Motor neuron (in vitro differentiated cells): ENCODE measurements at regions of chr20 and their contacts with region 1.

Region 1: DNA sequence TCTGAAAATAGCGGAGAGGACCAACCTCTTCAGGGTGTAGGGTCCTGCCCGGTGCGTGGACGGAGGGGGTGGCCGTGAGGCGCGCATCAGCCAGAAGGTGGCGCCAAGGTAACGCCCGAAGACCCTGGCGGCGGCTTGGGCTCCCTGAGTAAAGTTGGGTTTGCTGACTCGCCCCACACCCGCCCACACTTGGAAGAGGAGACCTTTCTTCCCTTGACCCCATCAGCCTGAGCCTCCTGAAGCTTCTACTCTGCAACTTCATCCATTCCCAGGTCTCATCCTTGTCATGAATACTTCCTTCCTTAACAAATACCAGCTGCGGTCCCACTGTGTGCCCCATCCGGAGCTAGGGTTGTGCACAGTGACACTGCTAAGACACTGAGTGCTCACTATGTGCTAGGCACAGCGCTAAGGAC is 14.6 kb downstream of the CD40 start:
- ATAC-seq: peak; percentile 77 to 87 (median 81)
- H3K4me3 ChIP-seq: no peak overlapping the region
- H3K27ac ChIP-seq: no peak overlapping the region
- H3K4me1 ChIP-seq: peaks cover 20 to 33% of the 10 kb centered on the region in 2 donors

Region 2: GRCh38 chr20:44435630-44436335 is 1696.9 kb before region 1 on chr20:
- in situ Hi-C with region 1: no loop called
- ATAC-seq: no peak
- H3K4me3 ChIP-seq: no peak overlapping the region
- H3K27ac ChIP-seq: no peak overlapping the region
- H3K4me1 ChIP-seq: no peaks in the 10 kb centered on the region

Region 3: GRCh38 chr20:45771182-45771759 is 361.4 kb before region 1 on chr20:
- in situ Hi-C with region 1: no loop called
- ATAC-seq: peak; percentile 55 to 79 (median 70)
- H3K4me3 ChIP-seq: no peak overlapping the region
- H3K27ac ChIP-seq: no peak overlapping the region
- H3K4me1 ChIP-seq: peaks cover 3 to 7% of the 10 kb centered on the region in 2 donors

Region 4: GRCh38 chr20:45971675-45972499 is 160.8 kb before region 1 on chr20 and contains the start of gene ZNF335:
- in situ Hi-C with region 1: no loop called
- ATAC-seq: peak; percentile 71 to 85 (median 81)
- H3K4me3 ChIP-seq: peak within 1 kb of the TSS; percentile 68 to 92 (median 78)
- H3K27ac ChIP-seq: peak within 1 kb of the TSS; percentile 100
- H3K4me1 ChIP-seq: peaks cover 7 to 12% of the 10 kb centered on the region in 2 donors
- total RNA-seq, gene ZNF335: 7.3 to 21.9 (median 12.1) TPM

Region 5: GRCh38 chr20:46270977-46271744 is 138.4 kb after region 1 on chr20:
- in situ Hi-C with region 1: no loop called
- ATAC-seq: no peak
- H3K4me3 ChIP-seq: no peak overlapping the region
- H3K27ac ChIP-seq: no peak overlapping the region
- H3K4me1 ChIP-seq: peaks cover 26 to 32% of the 10 kb centered on the region in 2 donors

Region 6: DNA sequence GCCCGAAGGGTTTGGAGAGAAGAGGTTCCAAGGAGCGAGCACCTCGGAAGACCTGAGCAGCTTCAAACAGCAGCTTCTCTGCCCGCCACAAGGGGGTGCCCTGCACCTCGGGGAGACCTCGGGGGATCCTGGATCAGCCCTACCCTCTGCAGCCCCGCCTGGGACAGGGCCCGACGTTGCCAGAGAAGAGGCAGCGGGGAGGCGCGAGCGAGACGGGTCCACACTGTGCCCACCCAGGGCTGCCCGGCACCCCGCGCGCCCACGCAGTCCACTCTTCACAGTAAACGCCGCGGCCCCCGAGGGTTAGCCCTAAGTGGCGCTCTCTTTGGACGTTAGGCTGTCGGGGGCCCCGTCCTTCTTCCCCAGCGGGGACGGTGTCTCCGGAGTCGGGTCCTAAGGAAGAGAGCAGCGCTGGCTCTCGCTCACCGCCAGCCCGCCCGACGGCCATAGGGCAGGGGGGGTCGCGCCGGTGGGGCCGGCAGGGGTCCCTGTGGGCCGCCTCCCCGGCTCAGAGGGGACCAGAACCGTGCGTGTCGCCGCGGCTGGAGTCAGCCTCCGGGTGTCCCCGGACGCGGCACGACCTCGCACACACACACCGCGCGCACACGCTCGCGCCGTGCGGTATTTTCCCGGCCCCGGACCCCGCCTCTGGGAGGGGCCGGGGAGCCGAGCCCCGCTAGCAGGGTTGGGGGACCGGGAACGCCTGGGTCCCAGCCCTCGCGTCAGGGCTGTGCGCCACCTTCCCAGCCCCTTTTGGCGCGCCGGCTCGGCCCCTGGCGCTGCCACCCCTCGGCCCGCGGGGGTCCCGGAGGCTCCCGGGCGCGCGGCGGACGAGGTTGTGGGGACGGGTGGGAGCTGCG is 174.7 kb after region 1 on chr20:
- in situ Hi-C with region 1: loop called in 4 of 9 experiments (anchors 25 kb)
- ATAC-seq: peak; percentile 20 to 75 (median 40)
- H3K4me3 ChIP-seq: peak overlapping the region; percentile 49 to 68 (median 54)
- H3K27ac ChIP-seq: no peak overlapping the region
- H3K4me1 ChIP-seq: peaks cover 11 to 22% of the 10 kb centered on the region in 2 donors

Region 7: GRCh38 chr20:46349035-46349741 is 216.5 kb after region 1 on chr20:
- in situ Hi-C with region 1: loop called in 3 of 9 experiments (anchors 10 to 25 kb)
- ATAC-seq: peak in 5 of 8 experiments; percentile 6 to 44 (median 24)
- H3K4me3 ChIP-seq: no peak overlapping the region
- H3K27ac ChIP-seq: peak overlapping the region; percentile 91 to 97
- H3K4me1 ChIP-seq: peaks cover 52 to 55% of the 10 kb centered on the region in 2 donors

Region 8: GRCh38 chr20:46438156-46438750 is 305.5 kb after region 1 on chr20:
- in situ Hi-C with region 1: loop called in 1 of 9 experiments (anchors 25 kb)
- ATAC-seq: peak; percentile 12 to 92 (median 60)
- H3K4me3 ChIP-seq: no peak overlapping the region
- H3K27ac ChIP-seq: no peak overlapping the region
- H3K4me1 ChIP-seq: no peaks in the 10 kb centered on the region

Region 9: GRCh38 chr20:46689082-46689754 is 556.5 kb after region 1 on chr20 and contains the start of gene TP53RK:
- in situ Hi-C with region 1: loop called in 1 of 9 experiments (anchors 25 kb)
- ATAC-seq: peak; percentile 92 to 97 (median 96)
- H3K4me3 ChIP-seq: peak within 1 kb of the TSS; percentile 76 to 93 (median 87)
- H3K27ac ChIP-seq: peak within 1 kb of the TSS; percentile 90
- H3K4me1 ChIP-seq: peaks cover 12 to 26% of the 10 kb centered on the region in 2 donors
- total RNA-seq, gene TP53RK: 12.3 to 23.7 (median 15.0) TPM